A673 (cell line): ENCODE measurements at regions of chr2 and their contacts with region 1.

Region 1: DNA sequence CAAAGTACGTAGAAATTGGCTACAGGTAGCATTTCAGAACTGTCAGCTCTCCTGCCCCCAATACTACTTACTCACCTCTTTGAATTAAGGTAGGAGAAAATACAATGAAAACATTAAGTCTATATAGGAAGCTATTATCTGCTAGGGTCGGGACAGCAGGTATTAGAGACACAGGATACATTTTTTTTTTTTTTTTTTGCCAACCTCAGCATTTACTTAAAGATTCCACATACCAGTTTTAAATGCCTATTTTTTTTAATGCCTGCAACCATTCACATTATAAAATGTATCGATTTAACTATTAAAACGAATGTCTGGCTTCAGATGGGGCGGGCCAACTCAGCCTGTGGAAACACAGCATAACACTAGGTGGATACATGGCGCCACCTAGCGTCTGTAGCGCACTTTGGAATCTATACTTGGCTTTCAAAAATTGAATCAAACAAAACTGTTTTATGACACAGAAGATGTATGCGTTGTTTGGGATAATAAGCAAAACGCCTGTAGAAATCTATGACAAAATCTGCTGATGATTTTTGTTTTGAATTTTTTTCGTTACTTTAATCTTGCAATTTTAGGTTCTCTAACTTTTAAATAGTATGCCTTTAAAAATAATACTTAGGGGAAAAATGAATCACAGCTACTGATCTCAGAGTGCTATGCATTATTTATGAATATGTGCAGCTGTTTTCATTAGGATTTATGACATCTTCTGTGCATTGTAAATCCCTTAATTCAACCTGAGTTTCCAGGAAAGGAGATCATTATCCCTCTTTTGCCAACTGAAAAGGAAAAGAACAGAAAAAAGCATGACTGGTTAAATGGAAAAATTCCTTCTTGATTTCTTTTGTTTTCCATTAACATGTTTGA is 261.0 kb downstream of the NYAP2 start:
- DNase-seq: peak; percentile 81
- H3K4me3 ChIP-seq: no peak overlapping the region
- H3K27ac ChIP-seq: no peak overlapping the region
- H3K4me1 ChIP-seq: peaks cover 12% of the 10 kb centered on the region
- H3K27me3 ChIP-seq: no peaks in the 10 kb centered on the region
- CTCF ChIP-seq: peak; percentile 93

Region 2: GRCh38 chr2:225122583-225123486 is 537.7 kb before region 1 on chr2:
- CTCF ChIA-PET with region 1: interaction called, 5 read pairs
- POLR2A ChIA-PET with region 1: no interaction called
- intact Hi-C with region 1: loop called (anchors 1 kb)
- DNase-seq: peak; percentile 63
- H3K4me3 ChIP-seq: peak overlapping the region; percentile 21
- H3K27ac ChIP-seq: no peak overlapping the region
- H3K4me1 ChIP-seq: peaks cover 12% of the 10 kb centered on the region
- H3K27me3 ChIP-seq: no peaks in the 10 kb centered on the region
- CTCF ChIP-seq: peak; percentile 57

Region 3: GRCh38 chr2:225282858-225283710 is 377.4 kb before region 1 on chr2:
- CTCF ChIA-PET with region 1: interaction called, 7 read pairs
- POLR2A ChIA-PET with region 1: no interaction called
- intact Hi-C with region 1: loop called (anchors 1 kb)
- DNase-seq: peak; percentile 53
- H3K4me3 ChIP-seq: no peak overlapping the region
- H3K27ac ChIP-seq: no peak overlapping the region
- H3K4me1 ChIP-seq: no peaks in the 10 kb centered on the region
- H3K27me3 ChIP-seq: no peaks in the 10 kb centered on the region
- CTCF ChIP-seq: peak; percentile 82

Region 4: DNA sequence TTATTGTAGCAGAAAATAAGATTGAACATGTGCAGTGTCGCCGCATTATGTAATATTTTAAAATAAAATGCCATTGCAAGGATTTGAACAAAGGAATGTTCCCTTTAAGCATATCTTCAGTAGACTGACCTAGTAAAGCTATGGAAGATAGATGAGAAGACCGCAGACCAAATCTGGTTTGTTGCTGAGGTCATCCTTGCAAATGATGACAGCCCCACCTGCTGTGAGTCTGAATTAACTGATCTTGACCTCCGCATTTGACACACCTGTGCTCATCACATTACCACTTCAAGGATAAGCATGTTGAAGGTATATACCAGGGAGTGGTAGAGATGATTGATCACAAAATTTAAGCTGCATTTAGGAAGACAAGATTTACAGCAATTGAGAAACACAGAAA is 164.8 kb before region 1 on chr2:
- CTCF ChIA-PET with region 1: no interaction called
- POLR2A ChIA-PET with region 1: no interaction called
- intact Hi-C with region 1: no loop called
- DNase-seq: no peak
- H3K4me3 ChIP-seq: no peak overlapping the region
- H3K27ac ChIP-seq: no peak overlapping the region
- H3K4me1 ChIP-seq: no peaks in the 10 kb centered on the region
- H3K27me3 ChIP-seq: no peaks in the 10 kb centered on the region
- CTCF ChIP-seq: no peak

Region 5: DNA sequence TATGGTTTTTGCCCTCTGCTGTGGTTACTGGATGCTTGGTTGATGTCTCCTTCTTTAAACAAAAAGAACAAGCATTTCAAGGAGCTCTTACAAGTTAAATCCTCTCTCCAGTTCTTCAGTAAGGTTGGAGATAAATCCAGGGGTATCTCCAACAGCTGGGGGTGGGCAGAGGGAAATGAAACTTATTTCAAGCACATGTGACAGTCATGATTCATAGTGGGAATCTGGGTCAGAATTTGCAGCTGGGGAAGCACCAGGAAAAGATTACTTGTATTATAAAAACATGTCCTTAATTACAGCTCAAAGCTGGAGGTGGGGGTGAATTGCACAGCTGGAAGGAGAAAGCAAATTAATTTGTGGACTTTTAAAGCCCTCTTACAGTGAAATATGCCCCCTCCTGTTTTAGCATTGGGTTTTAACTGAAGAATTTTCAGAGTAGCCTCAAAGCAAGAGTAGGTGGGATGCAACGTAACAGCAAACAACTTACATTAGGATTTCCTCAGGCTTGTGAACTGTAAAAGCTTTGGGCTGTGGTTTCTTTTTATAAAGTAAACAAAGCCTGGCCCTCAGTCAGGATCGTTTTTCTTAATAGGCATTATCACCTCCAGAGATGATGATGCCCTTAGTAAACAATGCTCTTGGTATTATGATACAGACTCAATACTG is 335.4 kb after region 1 on chr2:
- CTCF ChIA-PET with region 1: no interaction called
- POLR2A ChIA-PET with region 1: no interaction called
- intact Hi-C with region 1: no loop called
- DNase-seq: peak; percentile 32
- H3K4me3 ChIP-seq: no peak overlapping the region
- H3K27ac ChIP-seq: no peak overlapping the region
- H3K4me1 ChIP-seq: peaks cover 14% of the 10 kb centered on the region
- H3K27me3 ChIP-seq: no peaks in the 10 kb centered on the region
- CTCF ChIP-seq: no peak

Region 6: GRCh38 chr2:226984750-226985582 is 1324.5 kb after region 1 on chr2:
- CTCF ChIA-PET with region 1: interaction called, 16 read pairs
- POLR2A ChIA-PET with region 1: no interaction called
- intact Hi-C with region 1: no loop called
- DNase-seq: peak; percentile 88
- H3K4me3 ChIP-seq: no peak overlapping the region
- H3K27ac ChIP-seq: peak overlapping the region; percentile 52
- H3K4me1 ChIP-seq: peaks cover 14% of the 10 kb centered on the region
- H3K27me3 ChIP-seq: no peaks in the 10 kb centered on the region
- CTCF ChIP-seq: peak; percentile 77

Region 7: GRCh38 chr2:227106845-227107759 is 1446.6 kb after region 1 on chr2:
- CTCF ChIA-PET with region 1: interaction called, 4 read pairs
- POLR2A ChIA-PET with region 1: no interaction called
- intact Hi-C with region 1: loop called (anchors 2 kb)
- DNase-seq: peak; percentile 81
- H3K4me3 ChIP-seq: no peak overlapping the region
- H3K27ac ChIP-seq: no peak overlapping the region
- H3K4me1 ChIP-seq: no peaks in the 10 kb centered on the region
- H3K27me3 ChIP-seq: no peaks in the 10 kb centered on the region
- CTCF ChIP-seq: peak; percentile 87

Region 8: DNA sequence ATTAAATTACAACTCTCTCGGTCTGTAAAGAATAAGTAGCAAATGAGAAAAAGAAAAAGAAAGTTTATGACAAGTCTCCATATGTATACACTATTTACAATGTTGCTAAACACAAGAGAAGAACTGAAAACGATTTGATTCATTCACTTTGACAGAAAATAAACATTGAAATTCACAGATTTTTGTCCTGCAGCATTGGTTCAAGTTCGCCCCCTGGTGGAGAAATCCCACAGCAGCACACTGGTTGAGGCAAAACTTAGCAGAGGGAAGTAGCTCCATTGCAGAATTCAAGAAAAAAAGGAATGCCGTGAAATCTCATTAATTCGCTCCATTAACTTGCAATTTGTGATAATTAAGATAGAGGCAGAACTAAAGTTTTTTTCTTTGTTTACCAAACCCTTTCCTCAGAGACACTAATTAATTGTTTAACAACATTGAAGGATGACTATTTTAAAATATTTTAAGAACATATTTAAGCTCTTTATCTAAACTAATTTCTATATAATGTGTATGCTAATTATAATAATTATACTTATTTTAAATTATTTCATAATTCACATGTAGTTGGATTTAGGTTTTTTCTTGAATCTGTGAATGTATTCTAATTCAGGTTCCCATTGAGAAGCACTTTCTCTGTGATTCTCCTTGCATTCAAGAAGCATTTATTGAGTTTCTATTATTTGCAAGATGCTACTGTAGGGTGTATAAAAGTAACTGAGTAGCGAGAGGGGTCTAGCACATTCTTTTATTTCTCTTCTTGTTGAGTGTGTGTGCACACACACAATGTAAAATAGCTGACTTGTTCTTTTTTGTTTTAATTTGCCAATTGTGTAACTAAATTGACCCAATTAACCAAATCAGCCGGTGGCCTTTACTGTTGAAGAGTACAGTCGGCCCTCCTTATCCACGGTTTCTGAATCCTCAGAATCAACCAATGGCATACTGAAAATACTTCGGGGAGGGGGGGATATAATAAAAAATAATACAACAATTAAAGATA is 1578.0 kb after region 1 on chr2:
- CTCF ChIA-PET with region 1: interaction called, 3 read pairs
- POLR2A ChIA-PET with region 1: no interaction called
- intact Hi-C with region 1: loop called (anchors 10 kb)
- DNase-seq: peak; percentile 71
- H3K4me3 ChIP-seq: no peak overlapping the region
- H3K27ac ChIP-seq: no peak overlapping the region
- H3K4me1 ChIP-seq: no peaks in the 10 kb centered on the region
- H3K27me3 ChIP-seq: no peaks in the 10 kb centered on the region
- CTCF ChIP-seq: peak; percentile 98